Right cardiac atrium (tissue), 5 donors: ENCODE measurements at regions of chr12 and their contacts with region 1.

Region 1: GRCh38 chr12:42574851-42575266 is 14.7 kb downstream of the PRICKLE1 start:
- DNase-seq: no peak
- ATAC-seq: no peak
- H3K4me3 ChIP-seq: no peak overlapping the region
- H3K27ac ChIP-seq: no peak overlapping the region
- H3K4me1 ChIP-seq: peaks cover 1% of the 10 kb centered on the region
- H3K27me3 ChIP-seq: no peaks in the 10 kb centered on the region

Region 2: GRCh38 chr12:42631513-42631912 is 56.7 kb after region 1 on chr12:
- intact Hi-C with region 1: no loop called
- DNase-seq: no peak
- ATAC-seq: no peak
- H3K4me3 ChIP-seq: no peak overlapping the region
- H3K27ac ChIP-seq: no peak overlapping the region
- H3K4me1 ChIP-seq: no peaks in the 10 kb centered on the region
- H3K27me3 ChIP-seq: no peaks in the 10 kb centered on the region

Region 3: GRCh38 chr12:42679466-42679865 is 104.6 kb after region 1 on chr12:
- intact Hi-C with region 1: no loop called
- DNase-seq: no peak
- ATAC-seq: no peak
- H3K4me3 ChIP-seq: no peak overlapping the region
- H3K27ac ChIP-seq: no peak overlapping the region
- H3K4me1 ChIP-seq: no peaks in the 10 kb centered on the region
- H3K27me3 ChIP-seq: no peaks in the 10 kb centered on the region

Region 4: DNA sequence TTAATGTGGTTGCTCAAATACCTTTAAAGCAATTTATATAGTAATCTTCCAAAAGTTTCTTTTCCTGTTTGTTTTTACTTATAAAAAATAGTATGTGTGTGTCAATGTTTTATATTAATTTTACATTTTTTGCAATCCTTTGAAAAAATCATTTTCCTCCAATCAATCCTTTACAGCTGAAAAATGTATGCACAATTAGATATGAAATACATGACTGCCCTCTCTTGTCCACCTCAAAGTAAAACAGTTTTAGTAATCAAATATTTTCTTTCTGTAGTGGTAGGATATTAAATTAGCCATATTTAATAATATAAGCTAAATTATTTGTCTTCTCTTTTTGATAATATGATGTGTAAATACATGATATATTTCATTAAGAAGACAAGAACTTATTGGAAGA is 707.2 kb after region 1 on chr12:
- intact Hi-C with region 1: loop called in 3 of 4 experiments (anchors 10 kb)
- DNase-seq: no peak
- ATAC-seq: no peak
- H3K4me3 ChIP-seq: no peak overlapping the region
- H3K27ac ChIP-seq: no peak overlapping the region
- H3K4me1 ChIP-seq: no peaks in the 10 kb centered on the region
- H3K27me3 ChIP-seq: no peaks in the 10 kb centered on the region